Adrenal gland (tissue), 19 donors: ENCODE measurements at regions of chr19 and their contacts with region 1.

Region 1: DNA sequence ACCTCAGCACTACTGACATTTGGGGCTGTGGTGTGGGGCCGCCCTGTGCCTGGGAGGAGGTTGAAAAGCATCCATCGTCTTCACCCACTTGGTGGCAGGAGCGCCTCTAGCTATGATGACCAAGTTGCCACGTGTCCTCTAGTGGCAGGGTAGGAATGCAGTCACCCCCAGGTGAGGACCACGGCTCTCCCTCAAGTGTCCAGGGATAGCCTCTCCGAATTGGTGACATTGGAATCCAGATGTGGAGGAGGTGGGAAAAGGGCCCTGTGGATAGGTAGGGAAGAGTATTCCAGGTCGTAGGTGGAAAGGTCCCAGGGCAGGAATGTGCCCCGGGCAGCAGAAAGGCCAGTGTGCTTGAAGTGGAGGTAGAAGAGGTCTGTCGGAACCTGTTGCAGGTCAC is 37.6 kb downstream of the ARHGEF18 start:
- DNase-seq: peak in 4 of 7 donors; percentile 29 to 38 (median 34)
- H3K4me3 ChIP-seq: no peak overlapping the region
- H3K27ac ChIP-seq: peak overlapping the region in 2 of 5 donors; percentile 30 to 34
- H3K4me1 ChIP-seq: no peaks in the 10 kb centered on the region
- H3K27me3 ChIP-seq: no peaks in the 10 kb centered on the region
- CTCF ChIP-seq: no peak
- POLR2A ChIP-seq: no peak

Region 2: DNA sequence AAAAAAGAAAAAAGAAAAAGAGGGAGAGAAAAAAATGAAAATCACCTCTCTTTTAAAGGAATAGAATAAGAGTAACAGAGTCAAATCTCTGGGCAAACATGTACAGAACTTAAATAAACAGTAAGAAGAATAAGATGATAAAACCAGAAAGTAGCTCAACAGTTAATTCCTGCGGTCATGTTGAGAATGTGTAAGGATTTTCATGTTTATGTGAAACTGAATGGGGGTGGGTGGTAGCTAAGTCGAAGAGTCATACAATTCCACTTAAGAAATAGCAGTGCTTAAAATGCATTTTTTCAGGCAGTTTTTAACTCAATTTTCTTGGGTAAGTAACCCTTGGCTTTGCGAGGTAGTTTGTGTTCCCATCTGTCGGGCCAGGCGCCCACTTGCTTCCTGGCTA is 41.6 kb after region 1 on chr19:
- intact Hi-C with region 1: no loop called
- DNase-seq: no peak
- H3K4me3 ChIP-seq: no peak overlapping the region
- H3K27ac ChIP-seq: no peak overlapping the region
- H3K4me1 ChIP-seq: no peaks in the 10 kb centered on the region
- H3K27me3 ChIP-seq: no peaks in the 10 kb centered on the region
- CTCF ChIP-seq: no peak
- POLR2A ChIP-seq: no peak

Region 3: GRCh38 chr19:7535035-7535992 is 149.0 kb after region 1 on chr19 and contains the start of gene PNPLA6:
- intact Hi-C with region 1: loop called in 1 of 2 experiments (anchors 10 kb)
- DNase-seq: peak; percentile 94 to 98 (median 97)
- H3K4me3 ChIP-seq: peak within 1 kb of the TSS; percentile 27 to 98 (median 73)
- H3K27ac ChIP-seq: peak within 1 kb of the TSS; percentile 85 to 96 (median 88)
- H3K4me1 ChIP-seq: peaks cover 10% of the 10 kb centered on the region in 2 donors
- H3K27me3 ChIP-seq: no peaks in the 10 kb centered on the region
- CTCF ChIP-seq: peak in 1 of 6 experiments; percentile 0
- POLR2A ChIP-seq: peak; percentile 66 to 89
- total RNA-seq, gene PNPLA6: 23.7 to 257 (median 113) TPM